ENCODE measurements at regions of chr13 and their contacts with region 1.

Region 1: DNA sequence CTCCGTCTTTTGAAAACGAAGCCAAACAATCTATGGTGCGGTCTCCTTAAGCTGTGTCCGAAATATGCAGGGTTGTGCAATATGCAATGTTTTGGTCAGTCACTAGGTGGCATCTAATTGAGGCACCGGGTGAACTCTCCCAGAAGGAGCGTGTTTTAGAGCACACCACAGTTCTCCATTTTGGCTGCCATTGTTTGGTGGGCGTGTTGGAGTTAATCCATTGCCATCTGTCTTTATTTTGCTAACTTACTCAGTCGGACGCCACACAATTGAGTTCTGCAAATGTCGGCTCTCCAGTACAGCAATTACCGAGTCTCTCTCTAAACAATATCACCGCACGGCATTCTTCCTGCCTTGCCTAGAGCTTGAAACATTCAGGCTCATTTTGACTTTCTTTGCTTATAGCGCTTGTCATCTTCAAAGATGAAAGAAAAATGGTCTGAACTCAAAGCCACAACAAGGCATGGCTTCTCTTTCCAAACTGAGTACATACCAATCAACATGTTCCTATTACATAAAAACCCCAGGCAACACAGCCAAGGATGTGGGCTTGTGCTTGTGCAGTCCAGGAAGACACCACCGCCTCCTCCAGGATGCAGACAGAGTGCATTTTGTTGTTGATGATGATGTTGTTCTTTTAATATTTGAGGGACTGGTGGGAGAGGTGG is 182.0 kb upstream of the SERP2 start:
- DNase-seq: peak; percentile 62 to 63
- H3K4me3 ChIP-seq: no peak overlapping the region
- H3K4me3 Mint-ChIP-seq: no peak overlapping the region
- H3K27ac Mint-ChIP-seq: peak overlapping the region; percentile 36
- H3K4me1 ChIP-seq: peaks cover 6% of the 10 kb centered on the region; the same call in 1 of the 2 replicates
- H3K4me1 Mint-ChIP-seq: peaks cover 37% of the 10 kb centered on the region
- H3K27me3 ChIP-seq: no peaks in the 10 kb centered on the region
- H3K27me3 Mint-ChIP-seq: no peaks in the 10 kb centered on the region
- CTCF ChIP-seq: peak; percentile 47 to 57

Region 2: DNA sequence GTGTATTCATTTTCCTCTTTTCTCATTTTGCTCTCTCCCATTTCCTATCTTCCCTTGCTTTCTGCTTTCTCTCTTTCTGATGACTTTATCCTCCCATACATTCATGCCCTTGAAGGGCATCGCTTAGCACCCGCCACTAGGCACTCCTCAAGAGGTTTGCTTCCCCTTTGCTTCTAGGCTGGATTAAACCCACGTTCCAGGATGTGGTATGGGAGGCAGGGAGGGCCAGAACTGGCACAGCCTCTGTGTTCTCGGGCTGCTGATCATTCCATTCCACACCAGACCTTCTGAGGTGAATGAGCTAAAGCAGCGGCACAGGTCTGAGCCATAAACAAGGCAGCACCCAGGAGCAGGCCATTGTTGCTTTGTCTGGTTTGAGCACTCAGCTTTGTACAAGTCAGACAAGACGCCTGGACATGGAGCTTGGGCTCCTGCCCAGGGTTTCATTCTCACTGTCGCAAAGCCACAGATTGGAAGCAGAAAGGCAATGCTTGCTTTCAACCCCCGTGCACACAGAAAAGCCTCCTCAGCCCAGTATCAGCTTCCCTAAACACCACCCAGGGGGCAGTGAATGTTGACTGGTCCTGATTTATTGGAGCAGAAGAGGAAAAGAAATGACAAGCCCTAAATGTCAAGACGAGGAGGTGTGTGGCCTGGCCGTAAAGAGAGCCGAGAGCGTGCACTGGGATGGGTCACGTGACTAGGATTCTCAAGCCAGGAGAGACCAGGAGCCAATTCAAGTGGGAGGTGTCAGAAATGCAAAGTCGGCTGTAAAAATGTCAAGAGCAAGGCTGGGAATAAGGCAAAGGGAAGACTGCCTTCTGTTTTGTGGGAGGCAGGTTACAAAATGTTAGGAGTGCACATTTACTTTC is 36.0 kb before region 1 on chr13:
- CTCF ChIA-PET with region 1: no interaction called
- POLR2A ChIA-PET with region 1: no interaction called
- intact Hi-C with region 1: no loop called
- DNase-seq: no peak
- H3K4me3 ChIP-seq: no peak overlapping the region
- H3K4me3 Mint-ChIP-seq: peak overlapping the region; percentile 38
- H3K27ac Mint-ChIP-seq: no peak overlapping the region
- H3K4me1 ChIP-seq: peaks cover 12% of the 10 kb centered on the region; the same call in 1 of the 2 replicates
- H3K4me1 Mint-ChIP-seq: peaks cover 19% of the 10 kb centered on the region
- H3K27me3 ChIP-seq: no peaks in the 10 kb centered on the region
- H3K27me3 Mint-ChIP-seq: no peaks in the 10 kb centered on the region
- CTCF ChIP-seq: no peak

Region 3: DNA sequence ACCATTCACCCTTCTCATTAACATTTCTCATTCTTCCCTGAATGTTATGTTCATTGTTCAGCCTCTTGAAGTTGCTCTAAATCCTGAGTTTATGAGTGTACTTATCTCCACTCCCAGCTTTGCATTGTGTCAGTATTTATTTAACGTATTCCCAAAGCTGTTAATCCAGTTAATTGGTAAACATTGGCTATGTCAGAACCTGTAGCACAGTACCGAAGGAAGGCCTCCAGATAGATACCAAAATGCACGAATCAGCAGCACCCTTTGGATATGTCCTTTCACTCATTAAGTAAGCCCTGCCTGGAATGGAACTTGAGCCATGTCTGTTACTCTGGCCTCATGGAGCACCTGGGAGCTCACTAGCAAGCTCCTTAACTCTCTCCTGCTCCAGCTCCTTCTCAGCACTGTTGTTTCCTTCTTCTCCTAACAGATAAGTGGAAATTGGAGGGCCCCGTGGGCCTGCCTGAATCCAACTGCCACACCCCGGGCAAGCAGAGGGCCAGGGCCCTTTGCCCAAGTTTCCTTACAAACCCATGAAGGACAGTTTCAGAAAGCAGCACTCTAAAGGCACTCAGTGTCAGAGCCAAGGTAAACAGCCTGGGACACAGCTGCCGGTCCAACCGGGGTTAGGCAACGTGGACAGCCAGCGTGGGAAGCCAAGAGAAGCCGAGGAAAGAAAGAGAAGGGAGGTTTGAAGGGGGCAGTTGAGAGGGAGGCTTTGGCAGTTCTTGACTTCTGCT is 27.0 kb after region 1 on chr13:
- CTCF ChIA-PET with region 1: no interaction called
- POLR2A ChIA-PET with region 1: no interaction called
- intact Hi-C with region 1: loop called (anchors 1 kb)
- DNase-seq: peak; percentile 60 to 63
- H3K4me3 ChIP-seq: no peak overlapping the region
- H3K4me3 Mint-ChIP-seq: no peak overlapping the region
- H3K27ac Mint-ChIP-seq: peak overlapping the region; percentile 80
- H3K4me1 ChIP-seq: peaks cover 24% of the 10 kb centered on the region
- H3K4me1 Mint-ChIP-seq: peaks cover 34% of the 10 kb centered on the region
- H3K27me3 ChIP-seq: no peaks in the 10 kb centered on the region
- H3K27me3 Mint-ChIP-seq: no peaks in the 10 kb centered on the region
- CTCF ChIP-seq: no peak

Region 4: GRCh38 chr13:44252938-44253337 is 61.3 kb after region 1 on chr13:
- CTCF ChIA-PET with region 1: interaction called, 3 read pairs
- POLR2A ChIA-PET with region 1: no interaction called
- intact Hi-C with region 1: loop called (anchors 2 kb)
- DNase-seq: no peak
- H3K4me3 ChIP-seq: no peak overlapping the region
- H3K4me3 Mint-ChIP-seq: no peak overlapping the region
- H3K27ac Mint-ChIP-seq: no peak overlapping the region
- H3K4me1 ChIP-seq: no peaks in the 10 kb centered on the region
- H3K4me1 Mint-ChIP-seq: no peaks in the 10 kb centered on the region
- H3K27me3 ChIP-seq: no peaks in the 10 kb centered on the region
- H3K27me3 Mint-ChIP-seq: no peaks in the 10 kb centered on the region
- CTCF ChIP-seq: no peak

Region 5: DNA sequence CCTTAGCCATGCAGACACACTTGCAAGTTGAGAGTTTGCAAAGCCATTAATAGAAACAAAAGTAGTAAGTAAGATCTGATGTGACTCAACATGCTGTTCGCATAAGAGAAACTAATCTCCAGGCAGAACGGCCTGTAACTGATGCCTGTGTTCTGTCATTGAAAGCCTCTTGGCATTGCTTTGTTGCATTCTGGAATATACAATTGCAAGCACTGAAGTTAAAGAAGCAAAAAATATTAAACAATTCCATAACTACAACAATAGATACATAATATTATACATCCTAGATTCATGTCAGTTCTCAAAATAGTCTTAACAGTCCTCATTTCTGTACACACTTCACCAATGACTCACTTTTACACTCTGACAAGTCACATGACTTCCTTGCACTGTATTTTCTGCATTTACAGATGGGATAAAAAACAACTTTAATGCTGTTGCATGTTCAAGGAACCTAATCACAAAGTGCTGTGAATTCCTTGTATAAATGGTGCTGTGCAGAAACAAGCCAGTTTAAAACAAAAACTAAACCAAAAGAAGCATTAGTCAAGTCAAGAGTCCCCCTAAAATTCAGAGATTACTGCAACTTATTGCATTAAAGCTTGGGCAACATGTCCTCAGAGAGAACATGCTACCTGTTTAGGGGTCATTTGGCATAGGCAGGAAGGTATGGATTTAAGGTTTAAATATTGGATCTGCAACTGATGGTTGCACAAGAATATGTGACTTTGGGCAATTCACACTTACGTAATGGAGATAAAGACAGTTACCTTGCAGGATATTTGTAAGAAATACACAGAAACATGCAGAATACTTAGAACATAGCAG is 102.5 kb after region 1 on chr13:
- CTCF ChIA-PET with region 1: no interaction called
- POLR2A ChIA-PET with region 1: no interaction called
- intact Hi-C with region 1: no loop called
- DNase-seq: no peak
- H3K4me3 ChIP-seq: no peak overlapping the region
- H3K4me3 Mint-ChIP-seq: no peak overlapping the region
- H3K27ac Mint-ChIP-seq: no peak overlapping the region
- H3K4me1 ChIP-seq: no peaks in the 10 kb centered on the region
- H3K4me1 Mint-ChIP-seq: no peaks in the 10 kb centered on the region
- H3K27me3 ChIP-seq: no peaks in the 10 kb centered on the region
- H3K27me3 Mint-ChIP-seq: no peaks in the 10 kb centered on the region
- CTCF ChIP-seq: no peak